Naive thymus-derived CD4-positive, alpha-beta T cell (primary cell): ENCODE measurements at regions of chr17 and their contacts with region 1.

Region 1: GRCh38 chr17:996554-997344 is at the start of gene TIMM22:
- DNase-seq: peak; percentile 85 to 97 (median 93)
- ATAC-seq: peak; percentile 97
- H3K4me3 ChIP-seq: peak within 1 kb of the TSS; percentile 98
- H3K4me3 Mint-ChIP-seq: peak within 1 kb of the TSS; percentile 96 to 100 (median 98)
- H3K27ac ChIP-seq: peak within 1 kb of the TSS; percentile 87
- H3K27ac Mint-ChIP-seq: peak within 1 kb of the TSS; percentile 96 to 99 (median 98)
- H3K4me1 ChIP-seq: peaks cover 14 to 16% of the 10 kb centered on the region in 2 donors
- H3K4me1 Mint-ChIP-seq: peaks cover 13 to 32% (median 24%) of the 10 kb centered on the region in 7 donors
- H3K27me3 ChIP-seq: no peaks in the 10 kb centered on the region
- H3K27me3 Mint-ChIP-seq: peaks cover 0 to 2% (median 0%) of the 10 kb centered on the region in 5 donors
- total RNA-seq, gene TIMM22: 8.3 to 13.5 (median 11.3) TPM

Region 2: DNA sequence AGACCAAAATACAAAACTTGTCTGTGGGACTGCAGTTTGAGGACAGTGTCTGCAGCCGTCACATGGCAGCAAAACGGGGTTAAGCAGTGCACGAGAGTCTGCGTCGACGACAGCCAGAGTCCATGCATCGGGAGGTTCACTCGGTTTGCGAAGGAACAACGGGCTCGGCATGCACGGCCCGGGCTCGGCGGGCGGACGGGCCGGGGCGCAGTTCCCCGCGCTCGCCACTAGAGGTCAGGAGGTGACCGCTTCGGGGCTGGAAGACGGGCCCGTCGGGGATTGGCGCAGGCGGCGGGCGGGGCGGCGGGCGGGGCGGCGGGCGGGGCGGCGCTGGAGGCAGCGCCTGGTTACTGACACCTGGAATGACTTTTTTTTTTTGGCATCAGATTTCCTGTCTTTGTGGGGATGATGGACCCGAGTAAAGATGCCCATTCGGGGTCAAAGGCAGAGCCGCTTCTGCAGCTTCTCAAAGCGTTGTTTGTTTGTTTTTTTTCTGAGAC is 852.9 kb before region 1 on chr17:
- CTCF ChIA-PET with region 1: no interaction called
- POLR2A ChIA-PET with region 1: no interaction called
- intact Hi-C with region 1: loop called (anchors 5 kb)
- DNase-seq: peak; percentile 72 to 94 (median 82)
- ATAC-seq: peak; percentile 98
- H3K4me3 ChIP-seq: no peak overlapping the region
- H3K4me3 Mint-ChIP-seq: peak overlapping the region in 1 of 10 donors; percentile 60
- H3K27ac ChIP-seq: no peak overlapping the region
- H3K27ac Mint-ChIP-seq: no peak overlapping the region
- H3K4me1 ChIP-seq: peaks cover 0 to 4% of the 10 kb centered on the region in 2 donors
- H3K4me1 Mint-ChIP-seq: peaks cover 0 to 6% (median 3%) of the 10 kb centered on the region in 7 donors
- H3K27me3 ChIP-seq: no peaks in the 10 kb centered on the region
- H3K27me3 Mint-ChIP-seq: peaks cover 0 to 12% (median 0%) of the 10 kb centered on the region in 5 donors

Region 3: DNA sequence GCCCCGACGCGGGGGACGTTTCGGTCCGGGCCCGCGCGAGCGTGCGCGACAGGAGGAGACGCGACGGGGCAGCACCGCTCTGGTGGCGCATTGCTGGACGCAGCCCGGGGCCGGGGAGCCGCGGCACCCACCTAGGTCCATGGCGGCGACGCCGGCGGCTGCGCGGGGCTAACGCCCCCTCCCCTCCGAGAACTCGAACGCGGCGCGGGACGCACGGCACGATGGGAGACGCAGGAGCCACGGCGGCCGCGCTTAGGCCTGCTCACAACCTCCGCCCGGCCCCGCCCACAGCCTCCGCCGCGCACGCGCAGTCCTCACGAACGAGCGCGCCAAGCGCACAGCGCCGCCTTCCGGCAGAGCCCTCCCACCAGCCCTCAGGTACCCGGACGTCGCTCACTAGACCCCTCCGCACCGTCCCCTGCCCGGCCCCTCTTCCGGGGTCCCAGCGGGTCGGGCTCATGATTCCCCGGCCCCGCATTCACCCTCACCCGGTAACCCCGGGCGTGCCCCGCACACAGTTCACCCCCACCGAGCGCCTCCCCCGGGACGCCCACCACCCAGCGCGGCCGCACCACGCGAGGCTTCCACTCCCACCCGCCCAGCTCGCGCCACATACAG is 244.6 kb before region 1 on chr17 and contains the start of gene GEMIN4:
- CTCF ChIA-PET with region 1: interaction called, 5 read pairs
- POLR2A ChIA-PET with region 1: interaction called, 3 read pairs
- intact Hi-C with region 1: loop called (anchors 1 kb)
- DNase-seq: peak; percentile 92 to 100 (median 98)
- ATAC-seq: peak; percentile 96
- H3K4me3 ChIP-seq: peak within 1 kb of the TSS; percentile 80
- H3K4me3 Mint-ChIP-seq: peak within 1 kb of the TSS; percentile 90 to 97 (median 96)
- H3K27ac ChIP-seq: peak within 1 kb of the TSS; percentile 81
- H3K27ac Mint-ChIP-seq: peak within 1 kb of the TSS; percentile 88 to 98 (median 96)
- H3K4me1 ChIP-seq: peaks cover 15 to 22% of the 10 kb centered on the region in 2 donors
- H3K4me1 Mint-ChIP-seq: peaks cover 32 to 43% (median 40%) of the 10 kb centered on the region in 7 donors
- H3K27me3 ChIP-seq: no peaks in the 10 kb centered on the region
- H3K27me3 Mint-ChIP-seq: no peaks in the 10 kb centered on the region
- total RNA-seq, gene GEMIN4: 15.5 to 35.0 (median 28.9) TPM

Region 4: DNA sequence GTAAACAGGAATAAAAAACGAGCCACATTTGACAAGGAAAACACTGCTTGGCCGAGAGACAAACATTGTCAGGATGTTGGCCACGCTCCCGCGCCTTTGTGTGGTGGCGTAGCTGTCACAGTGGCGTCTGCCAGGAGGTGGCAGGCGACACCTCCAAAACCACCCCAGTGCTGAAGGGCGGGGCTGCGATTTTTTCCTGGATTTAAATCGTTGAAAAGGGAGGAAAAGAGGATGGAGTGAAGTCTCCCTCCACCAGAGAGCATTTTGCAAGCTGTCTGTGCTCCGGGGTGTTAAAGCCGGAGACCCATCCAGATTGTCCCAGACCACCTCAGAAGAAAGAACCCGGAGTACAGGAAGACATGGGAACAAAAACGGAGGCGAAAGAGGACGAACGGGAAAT is 201.9 kb before region 1 on chr17:
- CTCF ChIA-PET with region 1: interaction called, 7 read pairs
- POLR2A ChIA-PET with region 1: interaction called, 3 read pairs
- intact Hi-C with region 1: loop called (anchors 1 to 2 kb)
- DNase-seq: peak in 8 of 9 donors; percentile 19 to 42 (median 35)
- ATAC-seq: peak; percentile 74
- H3K4me3 ChIP-seq: no peak overlapping the region
- H3K4me3 Mint-ChIP-seq: peak overlapping the region in 1 of 10 donors; percentile 57
- H3K27ac ChIP-seq: no peak overlapping the region
- H3K27ac Mint-ChIP-seq: peak overlapping the region in 5 of 9 donors; percentile 14 to 79 (median 56)
- H3K4me1 ChIP-seq: peaks cover 2 to 6% of the 10 kb centered on the region in 2 donors
- H3K4me1 Mint-ChIP-seq: peaks cover 3 to 11% (median 7%) of the 10 kb centered on the region in 7 donors
- H3K27me3 ChIP-seq: no peaks in the 10 kb centered on the region
- H3K27me3 Mint-ChIP-seq: no peaks in the 10 kb centered on the region

Region 5: DNA sequence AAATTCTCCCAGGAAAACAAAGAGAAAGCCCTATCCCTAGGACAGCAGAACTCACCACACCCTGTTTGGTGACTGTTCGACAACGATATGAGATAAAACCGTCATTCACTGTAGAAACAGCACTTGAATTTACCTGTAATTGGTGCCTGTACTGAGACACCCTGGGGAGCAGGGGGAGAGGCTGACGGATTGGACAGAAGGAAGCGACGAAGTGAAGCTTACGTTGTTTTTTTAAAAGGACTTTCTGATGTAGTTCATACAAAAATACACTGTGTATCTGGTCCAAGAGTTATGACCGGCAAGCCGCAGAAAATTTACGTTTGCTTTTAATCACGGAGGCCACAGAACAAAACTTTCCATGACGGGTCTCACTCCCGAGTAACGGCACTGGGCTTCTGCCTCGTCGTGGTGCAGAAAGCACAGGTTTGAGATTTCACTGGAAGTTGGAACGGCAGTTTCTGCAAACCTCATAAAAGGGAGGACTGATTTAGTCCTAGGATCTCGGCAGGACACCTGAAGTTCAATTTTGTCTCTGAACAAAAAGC is 26.9 kb before region 1 on chr17:
- CTCF ChIA-PET with region 1: no interaction called
- POLR2A ChIA-PET with region 1: no interaction called
- intact Hi-C with region 1: no loop called
- DNase-seq: no peak
- ATAC-seq: no peak
- H3K4me3 ChIP-seq: no peak overlapping the region
- H3K4me3 Mint-ChIP-seq: peak overlapping the region in 1 of 10 donors; percentile 29
- H3K27ac ChIP-seq: no peak overlapping the region
- H3K27ac Mint-ChIP-seq: no peak overlapping the region
- H3K4me1 ChIP-seq: no peaks in the 10 kb centered on the region
- H3K4me1 Mint-ChIP-seq: peaks cover 0 to 4% (median 0%) of the 10 kb centered on the region in 7 donors
- H3K27me3 ChIP-seq: no peaks in the 10 kb centered on the region
- H3K27me3 Mint-ChIP-seq: peaks cover 25 to 58% (median 39%) of the 10 kb centered on the region in 5 donors

Region 6: DNA sequence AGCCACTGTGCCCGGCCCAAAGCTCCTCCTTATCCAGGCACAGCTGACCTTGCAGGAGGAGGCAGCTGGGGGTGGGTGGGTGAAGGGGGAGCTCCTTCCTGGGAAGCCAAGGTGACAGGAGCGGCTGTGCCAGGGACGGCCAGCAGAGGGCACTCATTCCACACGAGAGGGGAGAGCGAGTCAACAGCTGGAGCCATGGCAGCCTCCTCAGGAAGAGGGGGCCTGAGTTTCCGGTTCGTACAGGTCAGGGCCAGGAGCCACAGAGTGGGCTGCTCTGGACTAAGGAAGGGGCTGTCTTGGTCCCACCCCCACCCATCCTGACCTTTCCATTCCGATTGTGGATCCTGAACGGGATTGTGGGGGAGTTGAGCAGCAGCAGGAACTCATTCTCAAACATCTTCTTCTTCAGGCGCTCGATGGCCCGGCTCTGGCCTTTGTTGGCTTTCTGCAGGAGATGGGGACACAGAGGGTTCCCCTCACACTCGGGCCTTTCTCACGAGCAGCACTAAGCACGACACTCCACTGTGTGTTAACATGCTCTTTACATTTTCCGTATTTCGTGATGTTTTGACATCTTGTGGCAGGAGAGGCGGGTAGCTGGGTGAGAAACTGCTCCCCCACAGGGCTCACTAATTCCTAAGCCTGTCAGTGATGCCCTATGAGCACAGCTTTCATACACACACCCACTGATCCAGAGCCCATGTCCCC is 61.8 kb after region 1 on chr17:
- CTCF ChIA-PET with region 1: no interaction called
- POLR2A ChIA-PET with region 1: no interaction called
- intact Hi-C with region 1: no loop called
- DNase-seq: peak in 2 of 9 donors; percentile 14 to 55
- ATAC-seq: peak; percentile 49
- H3K4me3 ChIP-seq: no peak overlapping the region
- H3K4me3 Mint-ChIP-seq: no peak overlapping the region
- H3K27ac ChIP-seq: no peak overlapping the region
- H3K27ac Mint-ChIP-seq: no peak overlapping the region
- H3K4me1 ChIP-seq: no peaks in the 10 kb centered on the region
- H3K4me1 Mint-ChIP-seq: peaks cover 0 to 4% (median 0%) of the 10 kb centered on the region in 7 donors
- H3K27me3 ChIP-seq: no peaks in the 10 kb centered on the region
- H3K27me3 Mint-ChIP-seq: no peaks in the 10 kb centered on the region

Region 7: DNA sequence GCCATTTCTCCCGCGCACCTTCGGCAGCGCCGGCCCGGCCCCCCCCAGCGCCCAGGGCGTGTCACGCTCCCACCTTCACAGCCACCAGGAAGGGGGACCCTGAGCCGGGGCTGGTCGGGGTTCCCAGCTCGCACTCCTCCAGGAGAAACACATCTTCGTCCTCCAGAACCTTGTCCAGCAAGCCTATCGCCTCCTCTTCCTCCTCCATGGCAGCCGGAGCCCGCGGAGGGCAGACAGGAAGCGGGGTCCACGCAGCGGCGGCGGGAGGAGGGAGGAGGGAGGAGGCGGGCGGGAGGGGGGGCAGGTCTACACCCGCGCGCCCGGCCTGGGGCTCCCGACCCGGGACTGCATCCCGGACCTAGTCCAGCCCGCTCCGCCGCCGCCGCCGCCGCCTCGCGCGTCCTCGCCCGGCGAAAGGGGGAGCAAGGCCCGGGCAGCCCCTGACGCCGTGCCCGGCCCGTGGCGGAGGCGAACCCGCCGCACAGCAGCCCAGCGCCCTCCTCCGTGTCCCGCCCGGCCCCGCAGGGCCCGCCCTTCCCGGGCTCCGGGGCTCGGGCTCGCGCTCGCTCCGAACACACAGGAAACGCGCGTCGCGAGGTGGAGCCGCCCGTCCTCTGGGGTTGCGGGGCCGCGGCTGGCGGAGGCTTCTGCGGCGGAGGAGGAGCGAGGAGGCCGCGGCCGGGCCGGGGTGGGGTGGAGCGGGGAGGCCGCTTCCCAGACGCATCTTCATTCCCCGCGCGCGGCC is 112.3 kb after region 1 on chr17:
- CTCF ChIA-PET with region 1: no interaction called
- POLR2A ChIA-PET with region 1: no interaction called
- intact Hi-C with region 1: loop called in 1 of 2 experiments (anchors 2 kb)
- DNase-seq: peak; percentile 62 to 79 (median 76)
- ATAC-seq: peak; percentile 85
- H3K4me3 ChIP-seq: peak overlapping the region; percentile 71
- H3K4me3 Mint-ChIP-seq: peak overlapping the region; percentile 78 to 92 (median 86)
- H3K27ac ChIP-seq: peak overlapping the region; percentile 71
- H3K27ac Mint-ChIP-seq: peak overlapping the region in 8 of 9 donors; percentile 51 to 92 (median 86)
- H3K4me1 ChIP-seq: peaks cover 9 to 22% of the 10 kb centered on the region in 2 donors
- H3K4me1 Mint-ChIP-seq: peaks cover 16 to 47% (median 35%) of the 10 kb centered on the region in 7 donors
- H3K27me3 ChIP-seq: no peaks in the 10 kb centered on the region
- H3K27me3 Mint-ChIP-seq: no peaks in the 10 kb centered on the region